Activated CD8-positive, alpha-beta memory T cell treated with anti-CD3 and anti-CD28 coated beads, Interleukin-2, amount 10 ng/mL, durations not matched to agents 7 days and 5 days (primary cell): ENCODE measurements at regions of chr12 and their contacts with region 1.

Region 1: GRCh38 chr12:452667-453210 is 7.0 kb upstream of the B4GALNT3 start:
- DNase-seq: peak; percentile 84
- ATAC-seq: peak; percentile 68
- H3K4me3 Mint-ChIP-seq: no peak overlapping the region
- H3K27ac Mint-ChIP-seq: no peak overlapping the region
- H3K4me1 Mint-ChIP-seq: peaks cover 5% of the 10 kb centered on the region
- H3K27me3 Mint-ChIP-seq: peaks cover 30% of the 10 kb centered on the region

Region 2: DNA sequence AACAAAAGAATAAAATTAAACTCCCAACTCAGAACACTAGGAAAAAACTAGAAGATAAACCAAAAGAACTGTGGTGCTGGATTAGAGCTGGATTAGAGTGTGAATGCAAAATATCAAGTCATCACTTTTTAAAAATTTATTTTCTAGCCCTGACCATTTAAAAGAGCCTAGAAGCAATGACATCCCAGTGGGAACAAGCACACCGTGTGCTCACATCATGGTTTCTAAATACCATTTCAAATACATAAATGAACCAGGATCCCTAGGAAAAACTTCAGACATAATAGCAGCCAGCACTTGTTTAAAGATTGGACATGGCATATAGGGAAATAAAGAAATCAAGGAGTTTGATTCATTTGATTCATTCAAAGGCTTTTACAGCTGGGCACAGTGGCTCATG is 93.6 kb before region 1 on chr12:
- CTCF ChIA-PET with region 1: no interaction called
- DNase-seq: no peak
- ATAC-seq: no peak
- H3K4me3 Mint-ChIP-seq: no peak overlapping the region
- H3K27ac Mint-ChIP-seq: no peak overlapping the region
- H3K4me1 Mint-ChIP-seq: peaks cover 2% of the 10 kb centered on the region
- H3K27me3 Mint-ChIP-seq: no peaks in the 10 kb centered on the region

Region 3: DNA sequence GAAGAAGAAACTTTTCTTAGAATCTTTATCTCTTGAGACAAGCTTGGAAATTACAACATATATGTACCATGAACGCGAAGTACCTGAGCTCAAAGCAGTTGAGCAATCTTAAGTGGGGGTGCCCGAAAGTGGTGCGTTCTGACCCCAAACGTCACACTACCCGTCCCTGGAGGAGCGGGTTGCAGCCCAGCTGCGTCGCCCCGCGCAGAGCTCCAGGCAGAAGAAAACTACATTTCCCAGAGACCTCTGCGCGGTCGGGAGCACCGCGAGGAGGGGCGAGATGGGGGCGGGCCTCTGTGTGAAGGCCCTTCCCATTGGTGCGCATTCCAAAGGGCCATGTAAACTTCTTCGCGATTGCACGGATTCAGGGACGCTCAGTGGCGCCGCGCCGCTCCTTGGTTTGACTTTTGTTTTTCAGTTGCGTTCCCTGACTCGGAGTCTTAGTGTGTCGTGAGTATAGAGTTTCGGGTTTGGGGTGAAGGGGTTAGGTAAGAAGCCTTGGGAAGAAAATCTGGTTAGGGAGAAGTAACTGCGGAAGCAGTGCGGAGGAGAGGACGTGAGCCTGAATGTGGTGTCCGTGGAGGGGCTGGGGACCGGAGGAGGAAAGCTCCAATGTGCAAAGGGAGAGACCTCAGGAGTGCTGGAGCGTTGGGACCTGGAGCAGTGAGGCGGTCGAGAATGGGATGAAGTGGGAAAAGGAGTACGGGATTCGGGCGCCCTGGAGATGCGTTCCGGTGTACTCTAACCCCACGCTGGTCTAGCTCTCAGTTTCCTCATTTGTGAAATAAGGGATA is 51.3 kb before region 1 on chr12 and contains the start of gene CCDC77:
- CTCF ChIA-PET with region 1: interaction called, 15 read pairs
- DNase-seq: peak; percentile 95
- ATAC-seq: peak; percentile 100
- H3K4me3 Mint-ChIP-seq: no peak within 1 kb of the TSS
- H3K27ac Mint-ChIP-seq: no peak within 1 kb of the TSS
- H3K4me1 Mint-ChIP-seq: peaks cover 6% of the 10 kb centered on the region
- H3K27me3 Mint-ChIP-seq: no peaks in the 10 kb centered on the region
- total RNA-seq, gene CCDC77: 19.5 to 20.2 TPM

Region 4: GRCh38 chr12:442235-442884 is 10.4 kb before region 1 on chr12:
- CTCF ChIA-PET with region 1: interaction called, 43 read pairs
- DNase-seq: peak; percentile 56
- ATAC-seq: no peak
- H3K4me3 Mint-ChIP-seq: no peak overlapping the region
- H3K27ac Mint-ChIP-seq: no peak overlapping the region
- H3K4me1 Mint-ChIP-seq: no peaks in the 10 kb centered on the region
- H3K27me3 Mint-ChIP-seq: no peaks in the 10 kb centered on the region

Region 5: GRCh38 chr12:538731-539539 is 86.2 kb after region 1 on chr12:
- CTCF ChIA-PET with region 1: interaction called, 65 read pairs
- DNase-seq: no peak
- ATAC-seq: peak; percentile 69
- H3K4me3 Mint-ChIP-seq: no peak overlapping the region
- H3K27ac Mint-ChIP-seq: peak overlapping the region; percentile 54
- H3K4me1 Mint-ChIP-seq: peaks cover 7% of the 10 kb centered on the region
- H3K27me3 Mint-ChIP-seq: no peaks in the 10 kb centered on the region

Region 6: DNA sequence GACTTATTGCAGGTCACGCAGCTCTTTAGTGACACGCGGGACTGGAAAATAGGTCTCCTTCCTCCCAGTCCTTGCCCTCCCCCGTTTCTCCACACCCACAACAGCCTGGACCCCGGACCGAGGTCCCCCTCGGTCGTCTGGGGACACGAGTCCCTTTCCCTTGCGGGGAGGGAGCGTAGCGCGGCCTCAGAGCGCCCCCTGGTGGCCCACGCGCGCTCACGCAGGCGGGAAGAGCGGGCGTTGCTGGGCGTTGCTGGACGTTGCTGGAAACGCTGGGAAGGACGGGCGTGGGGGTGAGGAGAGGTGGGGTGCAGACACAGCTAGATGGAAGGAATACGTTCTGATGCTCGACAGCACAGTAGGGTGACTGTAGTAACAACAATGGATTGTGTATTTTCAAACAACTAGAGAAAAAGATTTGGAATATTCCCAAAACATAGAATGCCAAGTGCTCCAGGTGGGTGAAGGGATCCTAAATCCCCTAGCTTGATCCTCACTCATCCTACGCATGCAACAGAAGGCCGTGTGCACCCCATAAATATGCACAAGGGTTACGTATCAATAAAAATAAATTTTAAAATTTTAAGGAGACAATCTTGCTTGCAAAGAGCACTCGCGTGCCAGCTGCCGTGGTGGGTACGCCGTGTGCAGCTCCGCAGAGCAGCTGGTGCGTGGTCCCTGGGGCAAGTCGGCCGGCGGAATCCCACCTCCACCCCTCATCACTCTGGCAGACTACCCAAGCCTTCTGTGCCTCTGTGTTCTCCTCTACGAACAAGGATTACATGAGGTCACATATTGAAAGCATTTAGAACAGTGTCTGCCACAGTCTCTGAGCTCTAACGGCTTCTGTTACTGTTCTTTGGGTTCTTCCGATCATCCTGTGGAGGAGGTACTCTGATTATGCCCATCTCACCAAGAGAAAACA is 94.4 kb after region 1 on chr12:
- CTCF ChIA-PET with region 1: interaction called, 99 read pairs
- DNase-seq: peak; percentile 79
- ATAC-seq: peak; percentile 84
- H3K4me3 Mint-ChIP-seq: no peak overlapping the region
- H3K27ac Mint-ChIP-seq: no peak overlapping the region
- H3K4me1 Mint-ChIP-seq: peaks cover 14% of the 10 kb centered on the region
- H3K27me3 Mint-ChIP-seq: peaks cover 14% of the 10 kb centered on the region

Region 7: GRCh38 chr12:552466-552865 is 99.7 kb after region 1 on chr12:
- CTCF ChIA-PET with region 1: interaction called, 99 read pairs
- DNase-seq: no peak
- ATAC-seq: no peak
- H3K4me3 Mint-ChIP-seq: no peak overlapping the region
- H3K27ac Mint-ChIP-seq: no peak overlapping the region
- H3K4me1 Mint-ChIP-seq: peaks cover 35% of the 10 kb centered on the region
- H3K27me3 Mint-ChIP-seq: peaks cover 10% of the 10 kb centered on the region